ENCODE measurements at regions of chr17 and their contacts with region 1.

Region 1: GRCh38 chr17:68172461-68172954 is 75.3 kb upstream of the AMZ2 start:
- DNase-seq: peak; percentile 83
- ATAC-seq: peak; percentile 52
- H3K4me3 Mint-ChIP-seq: no peak overlapping the region
- H3K27ac Mint-ChIP-seq: no peak overlapping the region
- H3K4me1 Mint-ChIP-seq: peaks cover 42% of the 10 kb centered on the region
- H3K27me3 Mint-ChIP-seq: no peaks in the 10 kb centered on the region

Region 2: DNA sequence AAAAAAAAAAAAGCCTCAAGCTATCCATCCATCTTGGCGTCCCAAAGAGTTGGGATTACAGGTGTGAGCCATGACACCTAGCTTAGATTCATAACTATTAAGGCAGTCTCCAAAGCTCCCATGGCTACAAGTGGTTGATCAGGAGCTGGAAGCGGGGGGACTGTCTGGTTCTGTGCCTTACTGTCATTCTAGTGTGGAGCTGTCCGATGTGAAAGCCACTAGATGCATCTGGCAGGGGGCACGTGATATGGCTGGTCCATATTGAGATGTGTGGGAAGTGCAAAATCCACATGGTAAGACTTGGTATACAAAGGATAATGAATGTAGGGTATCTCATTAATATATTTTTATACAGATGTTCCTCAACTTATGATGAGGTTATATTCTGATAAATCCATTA is 98.2 kb before region 1 on chr17:
- CTCF ChIA-PET with region 1: no interaction called
- POLR2A ChIA-PET with region 1: no interaction called
- DNase-seq: no peak
- ATAC-seq: no peak
- H3K4me3 Mint-ChIP-seq: no peak overlapping the region
- H3K27ac Mint-ChIP-seq: no peak overlapping the region
- H3K4me1 Mint-ChIP-seq: no peaks in the 10 kb centered on the region
- H3K27me3 Mint-ChIP-seq: peaks cover 8% of the 10 kb centered on the region

Region 3: DNA sequence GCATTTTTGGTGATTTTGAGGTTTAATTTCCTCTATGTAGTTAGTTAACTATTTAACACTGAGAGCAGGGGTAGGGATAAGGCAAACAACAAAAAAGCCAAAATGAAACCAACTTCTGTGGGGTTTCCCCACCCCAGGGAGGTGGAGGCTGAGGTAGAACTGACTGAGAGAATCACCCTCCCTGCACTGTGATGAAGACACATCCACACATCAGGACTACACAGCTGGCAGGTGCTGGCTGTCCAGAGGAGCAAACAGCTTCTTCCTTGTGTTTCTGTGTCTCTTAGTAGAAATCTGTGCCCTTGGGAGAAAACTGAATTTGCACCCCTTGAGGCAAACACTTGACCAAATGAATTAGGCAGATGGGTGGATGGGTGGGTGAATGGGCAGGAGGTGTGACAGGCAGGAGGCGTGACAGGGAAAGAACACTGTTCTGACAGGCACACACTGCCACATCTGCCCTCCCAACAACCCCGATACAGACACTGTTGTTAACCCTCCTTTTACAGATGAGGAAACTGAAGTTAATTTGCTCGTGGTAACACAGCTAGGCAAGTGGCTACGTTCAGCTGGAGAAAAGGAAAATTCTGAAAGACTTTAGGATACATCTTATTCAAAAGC is 12.4 kb after region 1 on chr17:
- CTCF ChIA-PET with region 1: interaction called, 29 read pairs
- POLR2A ChIA-PET with region 1: interaction called, 11 read pairs
- DNase-seq: peak; percentile 78
- ATAC-seq: peak; percentile 76
- H3K4me3 Mint-ChIP-seq: peak overlapping the region; percentile 54
- H3K27ac Mint-ChIP-seq: peak overlapping the region; percentile 81
- H3K4me1 Mint-ChIP-seq: peaks cover 56% of the 10 kb centered on the region
- H3K27me3 Mint-ChIP-seq: peaks cover 2% of the 10 kb centered on the region

Region 4: GRCh38 chr17:68196944-68197595 is 24.6 kb after region 1 on chr17:
- CTCF ChIA-PET with region 1: interaction called, 115 read pairs
- POLR2A ChIA-PET with region 1: interaction called, 9 read pairs
- DNase-seq: peak; percentile 34
- ATAC-seq: peak; percentile 17
- H3K4me3 Mint-ChIP-seq: peak overlapping the region; percentile 25
- H3K27ac Mint-ChIP-seq: no peak overlapping the region
- H3K4me1 Mint-ChIP-seq: peaks cover 51% of the 10 kb centered on the region
- H3K27me3 Mint-ChIP-seq: peaks cover 52% of the 10 kb centered on the region

Measured in activated CD8-positive, alpha-beta T cell treated with anti-CD3 and anti-CD28 coated beads, Interleukin-2, amount 10 ng/mL, durations not matched to agents 7 days and 5 days (primary cell).